HEK293 (cell line): ENCODE measurements at regions of chr3 and their contacts with region 1.

Region 1: DNA sequence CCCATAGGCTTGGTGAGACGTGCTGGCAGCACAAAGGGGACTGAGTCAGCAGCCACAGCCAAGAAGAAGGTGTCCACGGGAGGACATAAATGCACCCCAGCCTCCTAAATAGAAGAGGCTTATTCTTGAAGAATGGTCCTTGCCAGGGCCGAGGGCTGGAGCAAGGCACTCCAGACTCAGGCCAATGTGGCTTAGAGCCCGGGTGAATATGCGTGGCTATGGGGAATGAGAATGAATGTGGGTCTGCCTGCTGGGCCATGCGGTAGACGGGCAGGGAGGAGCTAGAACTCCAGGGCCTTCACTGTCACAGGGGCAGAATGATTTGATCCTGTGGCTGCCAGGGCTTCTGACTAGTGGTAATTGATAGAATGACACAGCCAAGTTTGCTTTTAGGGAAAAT is 34.0 kb downstream of the DHX30 start:
- H3K4me3 ChIP-seq: no peak overlapping the region
- H3K27ac ChIP-seq: no peak overlapping the region
- H3K4me1 ChIP-seq: no peaks in the 10 kb centered on the region
- CTCF ChIP-seq: no peak

Region 2: GRCh38 chr3:47824541-47825473 is 12.2 kb before region 1 on chr3:
- CTCF ChIA-PET with region 1: interaction called, 12 read pairs
- POLR2A ChIA-PET with region 1: interaction called, 11 read pairs
- H3K4me3 ChIP-seq: peak overlapping the region; percentile 83
- H3K27ac ChIP-seq: peak overlapping the region; percentile 80
- H3K4me1 ChIP-seq: no peaks in the 10 kb centered on the region
- CTCF ChIP-seq: peak; percentile 75

Region 3: GRCh38 chr3:47899495-47900125 is 62.6 kb after region 1 on chr3:
- CTCF ChIA-PET with region 1: no interaction called
- POLR2A ChIA-PET with region 1: no interaction called
- H3K4me3 ChIP-seq: no peak overlapping the region
- H3K27ac ChIP-seq: no peak overlapping the region
- H3K4me1 ChIP-seq: no peaks in the 10 kb centered on the region
- CTCF ChIP-seq: no peak

Region 4: GRCh38 chr3:47989981-47990440 is 153.0 kb after region 1 on chr3:
- CTCF ChIA-PET with region 1: interaction called, 14 read pairs
- POLR2A ChIA-PET with region 1: no interaction called
- H3K4me3 ChIP-seq: no peak overlapping the region
- H3K27ac ChIP-seq: no peak overlapping the region
- H3K4me1 ChIP-seq: no peaks in the 10 kb centered on the region
- CTCF ChIP-seq: peak; percentile 70; the same call in 1 of the 2 replicates

Region 5: GRCh38 chr3:48151058-48151806 is 314.2 kb after region 1 on chr3:
- CTCF ChIA-PET with region 1: interaction called, 37 read pairs
- POLR2A ChIA-PET with region 1: interaction called, 5 read pairs
- H3K4me3 ChIP-seq: no peak overlapping the region
- H3K27ac ChIP-seq: no peak overlapping the region
- H3K4me1 ChIP-seq: no peaks in the 10 kb centered on the region
- CTCF ChIP-seq: peak; percentile 79

Region 6: DNA sequence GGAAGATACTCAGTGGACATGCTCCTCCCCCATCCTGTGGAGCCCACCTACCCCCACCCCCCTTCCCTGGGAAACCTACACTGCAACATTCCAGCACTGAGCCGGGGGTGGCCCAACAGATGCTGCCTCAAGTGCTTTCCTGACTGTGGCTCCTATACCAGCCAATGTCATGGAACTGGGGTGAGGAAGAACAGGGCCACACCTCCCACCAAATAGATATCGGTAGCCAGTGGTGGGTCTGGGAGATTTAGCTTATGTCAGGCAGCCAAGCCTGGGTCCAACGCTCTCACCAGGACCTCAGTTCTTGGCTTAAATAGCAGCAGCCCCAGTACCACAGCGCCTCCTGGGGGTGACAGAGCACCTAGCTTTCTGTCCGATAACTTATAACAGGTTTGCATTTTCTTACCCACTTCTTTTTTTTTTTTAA is 321.0 kb after region 1 on chr3:
- CTCF ChIA-PET with region 1: interaction called, 37 read pairs
- POLR2A ChIA-PET with region 1: interaction called, 3 read pairs
- H3K4me3 ChIP-seq: no peak overlapping the region
- H3K27ac ChIP-seq: no peak overlapping the region
- H3K4me1 ChIP-seq: no peaks in the 10 kb centered on the region
- CTCF ChIP-seq: 0 out of 2 replicates have a peak, but pooled peaks have one; percentile 8